ENCODE measurements at regions of chr11 and their contacts with region 1.

Region 1: GRCh38 chr11:65850831-65851811 is 6.9 kb downstream of the CFL1 start:
- DNase-seq: peak; percentile 53 to 75 (median 66)
- ATAC-seq: peak; percentile 60
- H3K4me3 ChIP-seq: no peak overlapping the region
- H3K27ac ChIP-seq: no peak overlapping the region
- H3K4me1 ChIP-seq: peaks cover under 1 to 31% of the 10 kb centered on the region in 2 experiments; a peak in 3 of 5 replicates
- H3K27me3 ChIP-seq: no peaks in the 10 kb centered on the region
- CTCF ChIP-seq: peak; percentile 50 to 83 (median 54)
- EP300 ChIP-seq: no peak
- POLR2A ChIP-seq: no peak
- RAD21 ChIP-seq: peak in 1 of 2 experiments; percentile 19; a peak in 1 of 4 replicates

Region 2: GRCh38 chr11:65261591-65262380 is 589.3 kb before region 1 on chr11 and contains the start of gene POLA2:
- CTCF ChIA-PET with region 1: no interaction called
- POLR2A ChIA-PET with region 1: no interaction called
- in situ Hi-C with region 1: no loop called
- intact Hi-C with region 1: no loop called
- DNase-seq: peak; percentile 98 to 100 (median 100)
- ATAC-seq: peak; percentile 92
- H3K4me3 ChIP-seq: peak within 1 kb of the TSS; percentile 65
- H3K27ac ChIP-seq: peak within 1 kb of the TSS; percentile 83
- H3K4me1 ChIP-seq: peaks cover 9 to 23% of the 10 kb centered on the region in 2 experiments; a peak in 4 of 5 replicates
- H3K27me3 ChIP-seq: no peaks in the 10 kb centered on the region
- CTCF ChIP-seq: no peak
- EP300 ChIP-seq: no peak
- POLR2A ChIP-seq: peak; percentile 96
- RAD21 ChIP-seq: no peak
- polyA plus RNA-seq, gene POLA2: 2.7 to 5.6 TPM

Region 3: GRCh38 chr11:65773784-65774411 is 77.2 kb before region 1 on chr11:
- CTCF ChIA-PET with region 1: no interaction called
- POLR2A ChIA-PET with region 1: no interaction called
- in situ Hi-C with region 1: no loop called
- intact Hi-C with region 1: no loop called
- DNase-seq: no peak
- ATAC-seq: no peak
- H3K4me3 ChIP-seq: no peak overlapping the region
- H3K27ac ChIP-seq: no peak overlapping the region
- H3K4me1 ChIP-seq: peaks cover 0 to 14% of the 10 kb centered on the region in 2 experiments; a peak in 2 of 5 replicates
- H3K27me3 ChIP-seq: no peaks in the 10 kb centered on the region
- CTCF ChIP-seq: peak in 2 of 3 experiments; percentile 2 to 14; a peak in 1 of 6 replicates
- EP300 ChIP-seq: no peak
- POLR2A ChIP-seq: no peak
- RAD21 ChIP-seq: no peak

Region 4: GRCh38 chr11:65826962-65827735 is 24.0 kb before region 1 on chr11:
- CTCF ChIA-PET with region 1: interaction called, 3 read pairs
- POLR2A ChIA-PET with region 1: interaction called, 27 read pairs
- in situ Hi-C with region 1: no loop called
- intact Hi-C with region 1: no loop called
- DNase-seq: peak in 2 of 4 experiments; percentile 3 to 5
- ATAC-seq: no peak
- H3K4me3 ChIP-seq: no peak overlapping the region
- H3K27ac ChIP-seq: no peak overlapping the region
- H3K4me1 ChIP-seq: no peaks in the 10 kb centered on the region
- H3K27me3 ChIP-seq: peaks cover 3 to 5% of the 10 kb centered on the region in 2 experiments; a peak in 2 of 5 replicates
- CTCF ChIP-seq: no peak
- EP300 ChIP-seq: no peak
- POLR2A ChIP-seq: no peak
- RAD21 ChIP-seq: no peak

Region 5: GRCh38 chr11:65833297-65834030 is 17.7 kb before region 1 on chr11 and contains the start of gene SNX32:
- CTCF ChIA-PET with region 1: interaction called, 3 read pairs
- POLR2A ChIA-PET with region 1: interaction called, 67 read pairs
- in situ Hi-C with region 1: no loop called
- intact Hi-C with region 1: no loop called
- DNase-seq: peak; percentile 83 to 96 (median 94)
- ATAC-seq: peak; percentile 100
- H3K4me3 ChIP-seq: no peak within 1 kb of the TSS
- H3K27ac ChIP-seq: no peak within 1 kb of the TSS
- H3K4me1 ChIP-seq: peaks cover 0 to 16% of the 10 kb centered on the region in 2 experiments; a peak in 2 of 5 replicates
- H3K27me3 ChIP-seq: peaks cover 4 to 24% of the 10 kb centered on the region in 2 experiments; a peak in 4 of 5 replicates
- CTCF ChIP-seq: no peak
- EP300 ChIP-seq: no peak
- POLR2A ChIP-seq: no peak
- RAD21 ChIP-seq: no peak
- polyA plus RNA-seq, gene SNX32: 0.03 TPM